ENCODE measurements at regions of chr16 and their contacts with region 1.

Region 1: DNA sequence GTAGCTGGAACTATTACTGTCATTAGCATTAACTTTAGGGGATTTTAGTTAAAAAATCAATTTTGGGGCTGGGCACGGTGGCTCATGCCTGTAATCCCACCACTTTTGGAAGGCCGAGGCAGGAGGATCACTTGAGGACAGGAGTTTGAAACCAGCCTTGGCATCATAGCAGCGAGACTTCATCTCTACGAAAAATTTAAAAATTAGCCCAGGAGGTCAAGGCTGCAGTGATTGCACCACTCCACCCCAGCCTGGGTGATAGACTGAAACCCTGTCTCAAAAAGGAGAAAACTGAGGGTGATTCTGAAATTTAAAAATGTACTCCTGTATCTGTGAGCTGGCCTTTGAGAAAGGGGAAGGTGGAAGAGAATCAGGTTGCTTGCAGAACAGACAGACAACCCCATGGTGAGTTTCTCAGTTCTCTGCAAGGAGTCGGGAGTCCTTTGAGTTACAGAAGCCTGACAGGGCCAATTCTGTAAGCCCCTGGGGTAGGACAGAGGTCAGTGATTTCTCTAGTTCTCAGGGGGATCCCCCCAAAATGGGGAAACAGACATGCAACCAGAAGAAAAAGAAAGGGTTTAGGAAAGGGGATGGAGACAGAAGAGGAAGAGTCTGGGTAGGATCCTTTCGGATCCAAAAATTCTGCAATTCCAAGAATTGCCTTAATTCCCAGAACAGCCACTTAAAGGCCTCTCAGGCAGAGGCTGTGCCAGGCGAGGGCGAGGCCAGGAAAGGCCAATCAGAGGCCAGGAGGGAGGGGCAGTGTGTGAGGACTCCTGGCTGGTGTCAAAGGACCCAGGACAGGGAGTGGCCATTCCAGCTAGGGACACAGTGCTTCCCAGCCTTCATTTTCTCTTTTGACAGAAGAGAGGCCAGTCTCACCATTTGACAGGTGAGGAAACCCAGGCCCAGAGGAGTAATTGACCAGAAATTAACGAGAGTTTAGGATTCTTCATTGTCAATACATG is 6.7 kb downstream of the NUPR1 start:
- DNase-seq: no peak
- H3K4me3 ChIP-seq: no peak overlapping the region
- H3K27ac ChIP-seq: no peak overlapping the region
- H3K4me1 ChIP-seq: peaks cover 9% of the 10 kb centered on the region
- H3K27me3 ChIP-seq: no peaks in the 10 kb centered on the region
- CTCF ChIP-seq: no peak

Region 2: GRCh38 chr16:28308794-28309584 is 223.1 kb before region 1 on chr16:
- CTCF ChIA-PET with region 1: interaction called, 17 read pairs
- dilution Hi-C with region 1: no loop called
- in situ Hi-C with region 1: no loop called
- intact Hi-C with region 1: no loop called
- DNase-seq: no peak
- H3K4me3 ChIP-seq: no peak overlapping the region
- H3K27ac ChIP-seq: no peak overlapping the region
- H3K4me1 ChIP-seq: no peaks in the 10 kb centered on the region
- H3K27me3 ChIP-seq: no peaks in the 10 kb centered on the region
- CTCF ChIP-seq: no peak

Region 3: GRCh38 chr16:28513484-28514181 is 18.4 kb before region 1 on chr16:
- CTCF ChIA-PET with region 1: no interaction called
- dilution Hi-C with region 1: no loop called
- in situ Hi-C with region 1: no loop called
- intact Hi-C with region 1: loop called (anchors 2 kb)
- DNase-seq: no peak
- H3K4me3 ChIP-seq: no peak overlapping the region
- H3K27ac ChIP-seq: no peak overlapping the region
- H3K4me1 ChIP-seq: no peaks in the 10 kb centered on the region
- H3K27me3 ChIP-seq: no peaks in the 10 kb centered on the region
- CTCF ChIP-seq: no peak

Region 4: GRCh38 chr16:28553776-28554633 is 21.9 kb after region 1 on chr16 and contains the start of gene SGF29:
- CTCF ChIA-PET with region 1: no interaction called
- dilution Hi-C with region 1: no loop called
- in situ Hi-C with region 1: no loop called
- intact Hi-C with region 1: no loop called
- DNase-seq: peak; percentile 86
- H3K4me3 ChIP-seq: peak within 1 kb of the TSS; percentile 45 to 91 (median 69)
- H3K27ac ChIP-seq: peak within 1 kb of the TSS; percentile 66
- H3K4me1 ChIP-seq: peaks cover 7% of the 10 kb centered on the region
- H3K27me3 ChIP-seq: no peaks in the 10 kb centered on the region
- CTCF ChIP-seq: peak in 1 of 2 donors; percentile 33
- total RNA-seq, gene SGF29: 12.7 to 17.7 TPM

Measured in mammary epithelial cell (primary cell).